ENCODE measurements at regions of chr15 and their contacts with region 1.

Region 1: GRCh38 chr15:34209421-34210282 is at the start of gene KATNBL1:
- DNase-seq: peak; percentile 95 to 98 (median 97)
- H3K4me3 ChIP-seq: peak within 1 kb of the TSS in 3 of 4 donors; percentile 24 to 63 (median 36)
- H3K27ac ChIP-seq: peak within 1 kb of the TSS in 4 of 5 donors; percentile 67 to 90 (median 76)
- H3K4me1 ChIP-seq: peaks cover 8 to 14% of the 10 kb centered on the region in 2 donors
- H3K27me3 ChIP-seq: no peaks in the 10 kb centered on the region
- CTCF ChIP-seq: peak; percentile 85 to 97 (median 94)
- POLR2A ChIP-seq: peak; percentile 81 to 93
- total RNA-seq, gene KATNBL1: 10.3 to 63.9 (median 27.2) TPM

Region 2: DNA sequence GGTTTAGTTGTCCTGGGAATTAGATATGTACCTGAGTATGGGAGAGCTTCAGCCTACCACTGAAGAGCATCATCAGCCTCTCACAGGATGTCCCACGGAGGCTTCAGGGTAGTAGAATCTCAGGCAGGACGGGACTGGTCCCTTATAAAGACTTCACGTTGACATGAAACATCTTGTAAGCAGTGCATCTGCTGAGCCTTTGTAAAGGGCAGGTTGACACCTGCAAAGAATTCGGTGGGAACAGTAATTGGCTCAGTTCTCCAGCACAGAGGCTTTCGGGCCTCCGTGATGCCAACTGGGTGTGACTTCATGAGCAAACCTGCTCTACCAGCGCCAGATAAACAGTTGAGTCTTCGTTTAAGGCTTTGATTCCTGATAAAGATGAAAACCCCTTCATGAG is 143.7 kb before region 1 on chr15:
- intact Hi-C with region 1: loop called (anchors 5 to 10 kb)
- DNase-seq: no peak
- H3K4me3 ChIP-seq: no peak overlapping the region
- H3K27ac ChIP-seq: no peak overlapping the region
- H3K4me1 ChIP-seq: no peaks in the 10 kb centered on the region
- H3K27me3 ChIP-seq: no peaks in the 10 kb centered on the region
- CTCF ChIP-seq: no peak
- POLR2A ChIP-seq: no peak

Region 3: GRCh38 chr15:34101366-34102175 is 108.1 kb before region 1 on chr15 and contains the starts of genes EMC7 and PGBD4:
- intact Hi-C with region 1: loop called in 1 of 2 experiments (anchors 10 kb)
- DNase-seq: peak; percentile 99 to 100 (median 99)
- H3K4me3 ChIP-seq: peak within 1 kb of the TSS; percentile 55 to 97 (median 72)
- H3K27ac ChIP-seq: peak within 1 kb of the TSS; percentile 63 to 94 (median 80)
- H3K4me1 ChIP-seq: peaks cover 11 to 28% of the 10 kb centered on the region in 2 donors
- H3K27me3 ChIP-seq: no peaks in the 10 kb centered on the region
- CTCF ChIP-seq: peak in 1 of 6 experiments; percentile 14
- POLR2A ChIP-seq: peak; percentile 70 to 94
- total RNA-seq, gene EMC7: 62.4 to 127 (median 88.2) TPM
- total RNA-seq, gene PGBD4: 0.30 to 3.0 (median 1.6) TPM

Region 4: DNA sequence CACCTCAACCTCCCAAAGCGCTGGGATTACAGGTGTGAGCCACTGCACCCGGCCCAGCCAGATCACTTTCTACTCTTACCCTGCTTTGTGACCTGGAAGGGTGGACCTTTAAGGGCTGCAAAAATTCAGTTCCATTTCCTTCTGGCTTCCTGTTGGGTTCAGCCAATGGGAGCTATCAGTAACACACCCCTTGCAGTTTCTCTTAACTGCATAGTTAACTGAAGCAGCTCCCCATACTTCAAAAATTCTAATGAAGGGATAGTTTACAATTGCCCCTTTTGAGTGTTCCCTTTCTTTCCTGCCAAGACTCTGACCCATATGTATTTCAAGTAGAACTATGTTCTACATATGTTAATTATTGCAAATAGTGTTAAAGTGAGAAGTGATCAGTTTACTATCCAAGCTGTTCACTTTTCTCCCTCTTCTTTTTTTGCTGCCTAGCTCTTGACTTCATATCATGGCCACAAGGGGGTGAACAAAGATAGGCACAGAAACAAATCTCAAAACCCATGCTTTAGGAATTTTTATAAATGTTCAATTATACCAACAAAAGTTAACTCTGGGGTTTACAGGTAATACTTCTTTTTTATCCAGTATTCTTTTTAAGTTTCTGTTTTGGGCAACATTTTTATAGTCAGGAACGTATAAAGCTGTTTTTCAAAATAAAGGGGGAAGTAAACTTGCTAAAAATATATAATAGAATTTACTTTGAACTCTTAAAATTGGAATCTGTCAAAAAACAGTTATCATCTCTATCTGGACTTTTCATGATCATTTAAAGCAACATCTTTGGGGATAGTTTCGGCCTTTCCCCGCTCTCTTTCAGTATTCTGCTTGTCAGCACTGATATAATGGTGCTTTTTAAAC is 99.6 kb before region 1 on chr15:
- intact Hi-C with region 1: loop called (anchors 5 to 10 kb)
- DNase-seq: peak in 2 of 7 donors; percentile 10 to 11
- H3K4me3 ChIP-seq: no peak overlapping the region
- H3K27ac ChIP-seq: no peak overlapping the region
- H3K4me1 ChIP-seq: no peaks in the 10 kb centered on the region
- H3K27me3 ChIP-seq: peaks cover 5% of the 10 kb centered on the region
- CTCF ChIP-seq: peak; percentile 44 to 59 (median 54)
- POLR2A ChIP-seq: no peak

Measured in adrenal gland (tissue), 19 donors.